Ovary (tissue), 10 donors: ENCODE measurements at regions of chr14 and their contacts with region 1.

Region 1: GRCh38 chr14:94213021-94213420 is 38.9 kb downstream of the PPP4R4 start:
- DNase-seq: no peak
- H3K4me3 ChIP-seq: no peak overlapping the region
- H3K27ac ChIP-seq: no peak overlapping the region
- H3K4me1 ChIP-seq: no peaks in the 10 kb centered on the region
- H3K27me3 ChIP-seq: no peaks in the 10 kb centered on the region
- CTCF ChIP-seq: no peak
- EP300 ChIP-seq: no peak
- POLR2A ChIP-seq: no peak

Region 2: GRCh38 chr14:92317511-92317910 is 1895.5 kb before region 1 on chr14:
- intact Hi-C with region 1: loop called in 1 of 4 experiments (anchors 5 kb)
- DNase-seq: no peak
- H3K4me3 ChIP-seq: no peak overlapping the region
- H3K27ac ChIP-seq: no peak overlapping the region
- H3K4me1 ChIP-seq: no peaks in the 10 kb centered on the region
- H3K27me3 ChIP-seq: no peaks in the 10 kb centered on the region
- CTCF ChIP-seq: no peak
- EP300 ChIP-seq: no peak
- POLR2A ChIP-seq: no peak

Region 3: DNA sequence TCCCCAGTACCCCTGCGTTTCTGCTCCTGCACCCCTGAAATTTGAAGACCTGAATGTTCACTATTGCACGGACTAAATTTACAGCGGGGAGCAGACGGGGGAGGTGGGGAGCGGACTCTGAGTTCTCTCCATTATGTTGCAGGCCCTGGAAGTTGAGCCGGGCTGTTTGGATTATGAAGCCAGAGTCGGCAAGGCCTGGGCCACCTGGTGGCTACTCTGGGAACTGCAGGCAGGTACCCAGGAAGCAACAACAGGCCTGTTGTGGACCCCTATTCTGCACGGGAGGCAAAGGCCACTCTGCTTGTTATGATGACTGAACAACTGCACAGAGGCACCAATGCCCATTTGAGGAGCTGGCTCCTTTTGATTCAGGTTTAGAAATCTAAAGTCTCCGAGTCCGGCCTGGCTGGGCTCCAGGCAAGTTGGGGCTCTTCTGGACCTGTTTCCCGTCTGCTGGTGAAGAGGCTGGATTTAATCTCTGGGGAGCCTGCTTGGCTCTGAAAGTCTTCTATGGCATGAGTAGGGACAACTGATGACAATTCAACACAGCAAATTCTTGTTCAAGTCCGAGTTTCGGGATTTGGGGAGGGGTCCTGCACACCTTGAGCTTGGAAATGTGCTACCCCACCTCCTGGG is 320.0 kb before region 1 on chr14:
- intact Hi-C with region 1: no loop called
- DNase-seq: peak; percentile 59 to 82 (median 78)
- H3K4me3 ChIP-seq: no peak overlapping the region
- H3K27ac ChIP-seq: no peak overlapping the region
- H3K4me1 ChIP-seq: peaks cover 3% of the 10 kb centered on the region
- H3K27me3 ChIP-seq: no peaks in the 10 kb centered on the region
- CTCF ChIP-seq: peak; percentile 67 to 91 (median 77)
- EP300 ChIP-seq: no peak
- POLR2A ChIP-seq: no peak